Naive thymus-derived CD8-positive, alpha-beta T cell (primary cell): ENCODE measurements at regions of chr5 and their contacts with region 1.

Region 1: GRCh38 chr5:55102348-55102747 is at the start of gene GZMA:
- DNase-seq: peak in 9 of 10 donors; percentile 22 to 85 (median 53)
- ATAC-seq: peak; percentile 84 to 85
- H3K4me3 Mint-ChIP-seq: peak within 1 kb of the TSS; percentile 73 to 97 (median 91)
- H3K27ac Mint-ChIP-seq: peak within 1 kb of the TSS; percentile 38 to 94 (median 90)
- H3K4me1 Mint-ChIP-seq: peaks cover 43 to 89% (median 81%) of the 10 kb centered on the region in 4 donors
- H3K27me3 Mint-ChIP-seq: no peaks in the 10 kb centered on the region
- polyA plus RNA-seq, gene GZMA: 12.6 to 713 (median 35.7) TPM

Region 2: DNA sequence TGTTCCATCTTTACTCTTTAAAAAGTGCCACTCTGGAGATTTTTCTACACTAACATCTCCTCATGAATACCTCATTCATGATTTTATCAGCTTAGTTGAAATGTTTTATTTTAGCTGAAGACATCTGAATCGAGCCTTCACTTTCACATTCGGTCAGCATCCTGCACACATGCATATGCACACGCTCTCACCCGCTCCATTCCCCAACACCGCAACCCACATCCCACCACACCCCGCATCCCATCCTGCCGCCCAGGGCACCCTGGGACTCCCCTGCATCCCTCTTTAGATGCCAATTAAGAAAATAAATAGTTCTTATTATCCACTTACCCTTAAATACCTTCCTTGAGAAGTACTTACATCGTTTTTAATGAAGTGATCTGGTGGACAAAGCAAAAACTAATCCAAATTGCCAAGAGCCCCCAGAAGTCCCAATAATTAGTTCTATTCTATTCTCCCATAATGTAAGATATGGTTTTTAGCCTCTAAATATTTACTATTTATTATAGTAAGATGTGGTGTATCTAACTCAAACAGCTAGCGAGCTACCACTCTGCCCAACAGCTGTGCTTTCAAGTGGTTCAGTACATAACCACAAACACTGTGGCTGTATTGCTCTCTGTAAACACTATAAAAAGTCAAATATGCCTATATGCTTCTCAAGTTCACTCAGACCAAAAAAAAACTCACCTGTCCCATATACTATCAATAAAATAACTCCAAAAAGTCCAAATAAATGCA is 40.1 kb before region 1 on chr5:
- POLR2A ChIA-PET with region 1: interaction called, 20 read pairs
- DNase-seq: peak in 8 of 10 donors; percentile 13 to 60 (median 42)
- ATAC-seq: peak; percentile 79 to 84
- H3K4me3 Mint-ChIP-seq: peak overlapping the region; percentile 68 to 90 (median 80)
- H3K27ac Mint-ChIP-seq: peak overlapping the region; percentile 41 to 85 (median 70)
- H3K4me1 Mint-ChIP-seq: peaks cover 38 to 55% (median 52%) of the 10 kb centered on the region in 4 donors
- H3K27me3 Mint-ChIP-seq: no peaks in the 10 kb centered on the region

Region 3: DNA sequence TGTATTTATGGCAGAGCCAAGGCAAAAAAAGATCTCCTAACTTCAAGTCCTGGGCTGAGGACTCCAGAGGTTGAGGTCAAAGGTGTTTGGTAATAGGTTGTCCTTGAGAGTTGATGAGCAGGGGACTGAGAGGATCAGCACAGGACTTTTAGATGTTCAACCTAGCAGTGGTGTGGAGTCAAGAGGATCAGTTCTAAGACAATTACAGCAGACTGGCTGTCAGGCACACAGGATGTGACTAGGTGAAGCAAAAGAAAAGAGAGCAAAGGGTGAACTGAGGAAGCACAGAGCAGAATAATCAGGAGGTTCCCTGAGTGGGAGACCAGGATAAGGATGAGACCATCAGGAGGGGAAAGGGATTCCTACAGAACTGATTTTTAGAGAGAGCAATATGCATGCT is 11.0 kb after region 1 on chr5:
- POLR2A ChIA-PET with region 1: interaction called, 10 read pairs
- DNase-seq: peak in 1 of 10 donors; percentile 9
- ATAC-seq: peak; percentile 39 to 44
- H3K4me3 Mint-ChIP-seq: no peak overlapping the region
- H3K27ac Mint-ChIP-seq: peak overlapping the region in 3 of 10 donors; percentile 1 to 5 (median 3)
- H3K4me1 Mint-ChIP-seq: peaks cover 12 to 18% (median 13%) of the 10 kb centered on the region in 4 donors
- H3K27me3 Mint-ChIP-seq: no peaks in the 10 kb centered on the region

Region 4: GRCh38 chr5:55232985-55233928 is 130.9 kb after region 1 on chr5 and contains the start of gene CCNO:
- POLR2A ChIA-PET with region 1: no interaction called
- DNase-seq: peak in 8 of 10 donors; percentile 27 to 73 (median 46)
- ATAC-seq: peak; percentile 71
- H3K4me3 Mint-ChIP-seq: peak within 1 kb of the TSS; percentile 72 to 96 (median 88)
- H3K27ac Mint-ChIP-seq: peak within 1 kb of the TSS in 3 of 10 donors; percentile 11 to 90 (median 23)
- H3K4me1 Mint-ChIP-seq: peaks cover 19 to 33% (median 31%) of the 10 kb centered on the region in 4 donors
- H3K27me3 Mint-ChIP-seq: peaks cover 52 to 80% (median 72%) of the 10 kb centered on the region in 5 donors
- polyA plus RNA-seq, gene CCNO: not detected

Region 5: DNA sequence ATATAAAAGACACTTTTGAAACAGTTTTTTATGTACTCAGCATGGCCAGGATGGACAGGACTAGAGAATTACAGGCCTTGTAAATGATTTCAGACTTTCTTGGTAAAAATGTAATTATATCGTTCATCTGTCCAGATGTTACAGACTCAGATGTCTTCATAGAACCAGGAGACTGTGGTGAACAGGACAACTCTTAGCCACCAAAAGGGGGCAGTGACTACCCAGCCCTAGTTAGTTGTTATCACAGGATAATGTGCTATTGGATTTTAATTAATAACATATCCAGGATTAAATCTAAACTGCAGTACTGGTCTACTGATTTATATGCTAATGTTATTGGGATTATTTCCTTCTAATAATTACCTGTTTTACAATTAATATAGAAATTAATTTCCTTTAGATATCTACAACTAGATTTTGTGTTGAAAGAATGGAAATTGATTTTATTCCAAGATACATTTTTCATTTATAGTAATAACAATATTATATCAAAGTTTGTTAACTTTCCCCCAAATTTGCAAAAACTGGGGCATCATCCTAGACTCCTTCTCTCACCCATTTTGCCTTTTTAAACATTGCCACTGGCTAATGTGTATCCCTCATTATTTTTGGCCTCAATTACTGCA is 304.8 kb after region 1 on chr5:
- POLR2A ChIA-PET with region 1: no interaction called
- DNase-seq: peak in 4 of 10 donors; percentile 11 to 31 (median 20)
- ATAC-seq: peak; percentile 44 to 49
- H3K4me3 Mint-ChIP-seq: no peak overlapping the region
- H3K27ac Mint-ChIP-seq: peak overlapping the region in 2 of 10 donors; percentile 24 to 38
- H3K4me1 Mint-ChIP-seq: peaks cover 7 to 13% (median 9%) of the 10 kb centered on the region in 4 donors
- H3K27me3 Mint-ChIP-seq: no peaks in the 10 kb centered on the region